ENCODE measurements at regions of chr1 and their contacts with region 1.

Region 1: GRCh38 chr1:109397538-109398342 is at the start of gene SORT1:
- DNase-seq: peak; percentile 93 to 98
- H3K4me3 ChIP-seq: peak within 1 kb of the TSS; percentile 59 to 83 (median 73)
- H3K27ac ChIP-seq: peak within 1 kb of the TSS; percentile 68
- H3K4me1 ChIP-seq: peaks cover 3 to 10% (median 7%) of the 10 kb centered on the region in 4 experiments; a peak in 6 of 7 replicates
- H3K27me3 ChIP-seq: no peaks in the 10 kb centered on the region
- CTCF ChIP-seq: peak; percentile 30 to 40 (median 39)
- EP300 ChIP-seq: no peak
- POLR2A ChIP-seq: peak; percentile 69 to 75
- RAD21 ChIP-seq: peak; percentile 48 to 64; a peak in 3 of 4 replicates
- total RNA-seq, gene SORT1: 67.4 and 69.6 TPM in 2 replicates

Region 2: GRCh38 chr1:109239580-109240095 is 158.1 kb before region 1 on chr1:
- CTCF ChIA-PET with region 1: interaction called, 17 read pairs
- POLR2A ChIA-PET with region 1: interaction called, 8 read pairs
- DNase-seq: peak; percentile 65 to 75
- H3K4me3 ChIP-seq: no peak overlapping the region
- H3K27ac ChIP-seq: peak overlapping the region; percentile 13; the same call in 1 of the 2 replicates
- H3K4me1 ChIP-seq: peaks cover 21 to 44% (median 31%) of the 10 kb centered on the region in 4 experiments
- H3K27me3 ChIP-seq: no peaks in the 10 kb centered on the region
- CTCF ChIP-seq: peak; percentile 78 to 91 (median 89)
- EP300 ChIP-seq: 0 out of 3 replicates have a peak, but pooled peaks of 1 of the 2 experiments have one; percentile 3
- POLR2A ChIP-seq: no peak
- RAD21 ChIP-seq: peak; percentile 29 to 60

Region 3: DNA sequence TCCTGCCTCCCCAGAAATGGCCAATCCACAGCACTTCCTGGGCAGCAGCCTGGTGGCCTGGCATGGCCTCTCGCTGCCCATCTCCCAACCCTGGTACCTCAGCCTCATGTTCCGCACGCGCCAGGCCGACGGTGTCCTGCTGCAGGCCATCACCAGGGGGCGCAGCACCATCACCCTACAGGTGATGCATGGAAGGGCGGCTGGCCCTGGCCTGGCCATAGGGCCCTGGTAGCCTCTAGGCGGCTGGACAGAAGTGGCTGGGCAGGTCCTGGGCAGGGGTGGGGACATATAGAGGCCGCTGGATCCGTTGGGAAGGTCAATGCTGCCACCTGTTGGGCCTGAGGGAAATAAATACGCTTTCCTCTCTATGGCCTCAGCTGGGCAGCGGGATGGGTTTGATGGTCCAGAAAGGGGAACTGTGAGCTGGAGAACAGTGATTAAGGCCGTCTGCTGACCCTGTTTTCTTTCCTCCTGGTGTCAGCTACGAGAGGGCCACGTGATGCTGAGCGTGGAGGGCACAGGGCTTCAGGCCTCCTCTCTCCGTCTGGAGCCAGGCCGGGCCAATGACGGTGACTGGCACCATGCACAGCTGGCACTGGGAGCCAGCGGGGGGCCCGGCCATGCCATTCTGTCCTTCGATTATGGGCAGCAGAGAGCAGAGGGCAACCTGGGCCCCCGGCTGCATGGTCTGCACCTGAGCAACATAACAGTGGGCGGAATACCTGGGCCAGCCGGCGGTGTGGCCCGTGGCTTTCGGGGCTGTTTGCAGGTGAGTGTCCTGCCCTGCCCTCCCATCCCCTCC is 133.9 kb before region 1 on chr1:
- CTCF ChIA-PET with region 1: interaction called, 24 read pairs
- POLR2A ChIA-PET with region 1: interaction called, 6 read pairs
- DNase-seq: peak; percentile 87 to 98
- H3K4me3 ChIP-seq: no peak overlapping the region; a peak in 1 of 8 replicates
- H3K27ac ChIP-seq: no peak overlapping the region
- H3K4me1 ChIP-seq: peaks cover 0 to 11% (median 3%) of the 10 kb centered on the region in 4 experiments; a peak in 4 of 7 replicates
- H3K27me3 ChIP-seq: no peaks in the 10 kb centered on the region
- CTCF ChIP-seq: peak in 2 of 3 experiments; percentile 100; a peak in 3 of 4 replicates
- EP300 ChIP-seq: no peak
- POLR2A ChIP-seq: no peak
- RAD21 ChIP-seq: peak; percentile 90 to 93

Region 4: DNA sequence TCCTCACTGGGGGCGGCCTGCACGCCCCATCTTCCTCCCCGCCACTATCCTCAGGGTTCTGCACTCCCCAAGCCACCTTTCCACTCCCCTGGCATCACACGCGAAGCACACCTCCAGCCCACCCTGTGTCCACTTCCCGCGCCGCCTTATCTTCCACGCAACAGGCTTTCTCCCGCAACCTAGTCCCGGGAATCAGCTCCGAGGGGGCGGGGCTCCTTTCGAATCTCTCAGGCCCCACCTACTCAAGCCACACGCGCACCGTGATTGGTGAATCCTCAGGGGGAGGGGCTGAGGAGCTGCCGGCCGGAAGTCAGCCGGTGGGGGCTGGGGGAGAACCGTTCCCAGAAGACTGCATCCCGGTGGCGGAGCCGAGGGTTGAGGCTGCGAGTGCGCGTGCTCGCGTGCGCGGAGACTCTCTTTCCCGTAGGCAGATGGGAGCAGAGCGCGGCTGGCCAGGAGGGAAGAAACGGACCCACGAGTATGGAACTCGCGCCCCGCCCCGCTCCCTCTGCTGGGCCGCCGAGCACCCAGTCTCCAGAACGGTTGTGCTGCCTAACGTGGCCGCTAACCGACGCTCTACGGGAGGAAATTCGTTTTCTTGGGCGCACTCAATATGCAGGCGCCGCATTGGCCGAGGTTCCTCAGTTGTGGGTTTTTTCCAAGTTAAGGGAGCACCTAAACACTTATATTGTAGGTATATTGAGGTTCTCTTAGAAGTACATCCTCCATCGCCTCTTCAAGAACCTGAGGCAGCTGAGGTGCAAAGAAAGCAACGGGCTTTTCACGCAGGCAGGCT is 114.6 kb before region 1 on chr1 and contains the start of gene PSRC1:
- CTCF ChIA-PET with region 1: interaction called, 113 read pairs
- POLR2A ChIA-PET with region 1: interaction called, 18 read pairs
- DNase-seq: peak; percentile 81 to 96
- H3K4me3 ChIP-seq: peak within 1 kb of the TSS; percentile 54 to 95 (median 86)
- H3K27ac ChIP-seq: peak within 1 kb of the TSS; percentile 87
- H3K4me1 ChIP-seq: peaks cover 8 to 11% (median 10%) of the 10 kb centered on the region in 4 experiments
- H3K27me3 ChIP-seq: no peaks in the 10 kb centered on the region
- CTCF ChIP-seq: no peak; a peak in 1 of 4 replicates
- EP300 ChIP-seq: no peak
- POLR2A ChIP-seq: peak; percentile 81 to 88; a peak in 2 of 3 replicates
- RAD21 ChIP-seq: no peak
- total RNA-seq, gene PSRC1: 67.3 and 69.6 TPM in 2 replicates

Region 5: DNA sequence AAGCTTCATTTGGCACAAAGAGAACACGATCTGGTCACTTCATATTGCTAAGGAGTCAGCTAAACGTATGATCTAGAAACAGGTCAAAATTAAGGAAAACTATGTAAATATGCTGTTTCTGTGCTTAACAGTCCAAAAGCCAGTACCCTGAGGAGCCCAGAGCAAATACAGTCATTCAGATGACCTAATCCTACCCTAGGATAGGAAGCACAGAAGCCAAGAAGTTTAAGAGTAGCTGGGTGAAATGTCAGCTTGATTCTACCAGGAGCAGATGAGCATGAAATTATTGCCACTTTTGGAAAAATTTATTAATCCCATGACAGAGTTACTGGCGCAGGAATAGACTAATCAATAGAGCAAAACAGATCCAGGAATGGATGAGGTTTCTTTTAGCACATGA is 18.3 kb before region 1 on chr1:
- CTCF ChIA-PET with region 1: interaction called, 26 read pairs
- POLR2A ChIA-PET with region 1: interaction called, 13 read pairs
- DNase-seq: no peak
- H3K4me3 ChIP-seq: no peak overlapping the region
- H3K27ac ChIP-seq: no peak overlapping the region
- H3K4me1 ChIP-seq: peaks cover 0 to 14% (median 3%) of the 10 kb centered on the region in 4 experiments; a peak in 3 of 7 replicates
- H3K27me3 ChIP-seq: no peaks in the 10 kb centered on the region
- CTCF ChIP-seq: no peak
- EP300 ChIP-seq: no peak
- POLR2A ChIP-seq: no peak
- RAD21 ChIP-seq: no peak

Region 6: GRCh38 chr1:109412551-109412950 is 14.8 kb after region 1 on chr1:
- CTCF ChIA-PET with region 1: interaction called, 26 read pairs
- POLR2A ChIA-PET with region 1: interaction called, 3 read pairs
- DNase-seq: no peak
- H3K4me3 ChIP-seq: no peak overlapping the region
- H3K27ac ChIP-seq: no peak overlapping the region
- H3K4me1 ChIP-seq: no peaks in the 10 kb centered on the region
- H3K27me3 ChIP-seq: peaks cover 0 to 1% (median 0%) of the 10 kb centered on the region in 4 experiments; a peak in 1 of 7 replicates
- CTCF ChIP-seq: no peak
- EP300 ChIP-seq: no peak
- POLR2A ChIP-seq: no peak
- RAD21 ChIP-seq: no peak

Region 7: DNA sequence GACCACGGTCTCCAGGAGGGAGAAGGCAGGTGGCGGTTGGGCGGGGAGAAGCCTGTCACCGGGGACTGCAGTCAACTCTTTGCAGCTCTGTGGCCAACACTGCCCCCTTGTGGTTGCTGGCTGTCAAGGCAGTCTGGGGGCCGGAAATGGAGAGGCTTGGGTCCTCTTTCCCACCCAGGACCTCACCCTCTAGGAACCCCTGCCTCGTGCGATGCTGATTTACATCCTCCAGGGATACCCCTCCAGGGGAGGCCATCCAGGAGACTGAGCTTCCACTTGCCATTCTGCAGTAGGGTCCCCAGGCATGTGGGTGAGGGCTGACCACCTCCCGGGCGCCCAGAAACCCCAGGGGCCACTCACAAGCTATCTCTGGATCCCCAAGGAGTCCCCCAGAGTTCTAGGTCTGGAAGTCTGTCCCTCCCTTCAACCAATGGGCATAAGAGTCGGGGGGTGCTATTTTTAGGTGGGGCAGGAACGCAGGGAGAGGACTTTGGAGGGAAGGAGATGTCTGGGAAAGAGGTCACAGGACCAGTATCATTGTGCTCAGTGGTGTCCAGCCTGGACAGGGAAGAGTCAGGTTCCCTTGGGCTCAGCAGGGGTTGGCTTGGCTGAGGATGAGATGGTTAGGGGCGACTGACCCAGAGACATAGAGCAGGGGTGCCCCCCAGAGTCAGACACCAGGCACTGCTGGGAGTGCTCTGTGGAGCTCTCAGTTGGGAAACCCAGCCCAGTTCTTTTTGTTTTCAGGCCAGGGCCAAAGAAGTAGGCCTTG is 134.8 kb after region 1 on chr1:
- CTCF ChIA-PET with region 1: interaction called, 42 read pairs
- POLR2A ChIA-PET with region 1: no interaction called
- DNase-seq: peak in 1 of 2 experiments; percentile 97
- H3K4me3 ChIP-seq: peak overlapping the region in 2 of 4 experiments; percentile 10 to 40; a peak in 1 of 8 replicates
- H3K27ac ChIP-seq: no peak overlapping the region
- H3K4me1 ChIP-seq: peaks cover 0 to 3% (median 1%) of the 10 kb centered on the region in 4 experiments; a peak in 4 of 7 replicates
- H3K27me3 ChIP-seq: no peaks in the 10 kb centered on the region
- CTCF ChIP-seq: peak; percentile 92 to 98 (median 96)
- EP300 ChIP-seq: no peak
- POLR2A ChIP-seq: no peak
- RAD21 ChIP-seq: peak; percentile 93

Measured in H1 (cell line).